Head of caudate nucleus (tissue), 42 donors: ENCODE measurements at regions of chr21 and their contacts with region 1.

Region 1: GRCh38 chr21:41879190-41879998 is at the start of gene PRDM15:
- DNase-seq: peak; percentile 63 to 94 (median 87)

Region 2: GRCh38 chr21:41948078-41948895 is 68.9 kb after region 1 on chr21:
- intact Hi-C with region 1: loop called (anchors 5 kb)
- DNase-seq: peak in 41 of 42 donors; percentile 56 to 96 (median 84)

Region 3: GRCh38 chr21:42002421-42002958 is 123.1 kb after region 1 on chr21:
- intact Hi-C with region 1: loop called (anchors 5 kb)
- DNase-seq: peak in 36 of 42 donors; percentile 23 to 85 (median 54)

Region 4: DNA sequence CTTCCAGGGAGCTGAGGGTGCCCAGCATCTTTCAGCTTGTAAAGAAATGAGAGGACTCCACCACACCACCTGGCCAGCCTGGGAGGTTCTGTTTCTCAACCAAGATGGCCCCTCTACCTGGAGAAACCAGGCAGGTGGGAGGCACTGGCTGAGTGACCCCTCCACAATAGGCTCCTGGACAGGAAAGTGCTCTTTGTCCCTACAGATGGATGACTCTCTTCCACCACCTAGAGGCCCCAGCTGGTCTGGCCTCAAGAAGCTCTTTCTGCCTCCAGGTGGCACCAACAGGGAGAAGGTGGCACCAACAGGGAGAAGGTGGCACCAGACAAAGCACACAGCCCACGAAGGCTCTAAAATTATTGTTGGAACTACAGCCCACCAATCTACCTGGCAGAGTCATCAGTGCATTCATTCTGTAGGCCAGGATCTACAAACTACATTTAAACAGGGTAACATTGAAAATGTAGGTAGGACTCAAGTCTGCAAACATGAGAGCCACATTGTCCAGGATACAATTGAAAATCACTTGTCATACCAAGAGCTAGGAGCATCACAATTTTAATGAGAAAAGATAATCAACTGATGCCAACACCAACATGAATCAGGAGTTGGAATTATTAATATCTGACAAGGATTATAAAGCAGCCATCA is 502.1 kb after region 1 on chr21:
- intact Hi-C with region 1: no loop called
- DNase-seq: peak in 10 of 42 donors; percentile 4 to 45 (median 20)